Vagina (tissue), 2 donors: ENCODE measurements at regions of chr10 and their contacts with region 1.

Region 1: GRCh38 chr10:97334370-97335175 is at the start of gene FRAT2:
- DNase-seq: peak in 1 of 2 donors; percentile 95
- H3K4me3 ChIP-seq: peak within 1 kb of the TSS; percentile 75 to 79
- H3K27ac ChIP-seq: peak within 1 kb of the TSS; percentile 94
- H3K4me1 ChIP-seq: peaks cover 69% of the 10 kb centered on the region
- H3K27me3 ChIP-seq: no peaks in the 10 kb centered on the region
- CTCF ChIP-seq: no peak
- POLR2A ChIP-seq: peak in 1 of 2 donors; percentile 61
- total RNA-seq, gene FRAT2: 8.6 TPM

Region 2: DNA sequence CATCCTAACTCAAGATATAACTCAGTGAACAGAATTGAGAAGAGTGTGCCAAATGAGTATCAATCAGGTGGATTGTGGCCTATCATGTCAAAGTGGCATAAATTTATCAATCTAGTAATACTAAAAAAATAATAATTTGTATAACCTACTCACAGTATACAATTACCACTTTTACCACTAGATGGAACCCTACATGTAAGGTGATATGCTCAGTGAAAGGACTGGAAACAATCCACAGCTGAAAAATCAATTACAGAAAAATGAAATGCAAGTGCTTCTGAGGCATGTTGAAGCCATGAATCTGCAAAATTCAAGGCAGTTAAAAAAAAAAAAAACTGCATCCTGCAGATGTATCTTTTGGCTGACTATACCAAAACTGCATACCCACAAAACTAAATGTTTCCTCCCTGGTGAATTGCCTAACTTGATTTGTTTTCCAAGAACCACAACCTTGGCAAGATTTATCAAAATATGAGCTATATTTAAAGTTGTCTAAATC is 56.0 kb before region 1 on chr10:
- intact Hi-C with region 1: loop called (anchors 5 kb)
- DNase-seq: no peak
- H3K4me3 ChIP-seq: no peak overlapping the region
- H3K27ac ChIP-seq: peak overlapping the region; percentile 46
- H3K4me1 ChIP-seq: peaks cover 23% of the 10 kb centered on the region
- H3K27me3 ChIP-seq: no peaks in the 10 kb centered on the region
- CTCF ChIP-seq: peak; percentile 50 to 55 (median 52)
- POLR2A ChIP-seq: no peak

Region 3: GRCh38 chr10:97292097-97292862 is 42.3 kb before region 1 on chr10 and contains the start of gene ARHGAP19:
- intact Hi-C with region 1: loop called (anchors 5 kb)
- DNase-seq: peak in 1 of 2 donors; percentile 98
- H3K4me3 ChIP-seq: peak within 1 kb of the TSS; percentile 73 to 97
- H3K27ac ChIP-seq: peak within 1 kb of the TSS; percentile 90
- H3K4me1 ChIP-seq: peaks cover 8% of the 10 kb centered on the region
- H3K27me3 ChIP-seq: no peaks in the 10 kb centered on the region
- CTCF ChIP-seq: no peak
- POLR2A ChIP-seq: peak; percentile 39 to 61
- total RNA-seq, gene ARHGAP19: 3.9 TPM

Region 4: GRCh38 chr10:97318772-97319651 is 15.6 kb before region 1 on chr10 and contains the start of gene FRAT1:
- intact Hi-C with region 1: loop called (anchors 2 kb)
- DNase-seq: peak in 1 of 2 donors; percentile 94
- H3K4me3 ChIP-seq: peak within 1 kb of the TSS; percentile 63 to 93
- H3K27ac ChIP-seq: peak within 1 kb of the TSS; percentile 97
- H3K4me1 ChIP-seq: peaks cover 31% of the 10 kb centered on the region
- H3K27me3 ChIP-seq: no peaks in the 10 kb centered on the region
- CTCF ChIP-seq: no peak
- POLR2A ChIP-seq: peak in 1 of 2 donors; percentile 63
- total RNA-seq, gene FRAT1: 4.4 TPM